Lower leg skin (tissue), 4 donors: ENCODE measurements at regions of chr9 and their contacts with region 1.

Region 1: GRCh38 chr9:9783711-9784110 is 829.1 kb downstream of the PTPRD start:
- DNase-seq: no peak
- H3K4me3 ChIP-seq: no peak overlapping the region
- CTCF ChIP-seq: no peak
- POLR2A ChIP-seq: no peak

Region 2: DNA sequence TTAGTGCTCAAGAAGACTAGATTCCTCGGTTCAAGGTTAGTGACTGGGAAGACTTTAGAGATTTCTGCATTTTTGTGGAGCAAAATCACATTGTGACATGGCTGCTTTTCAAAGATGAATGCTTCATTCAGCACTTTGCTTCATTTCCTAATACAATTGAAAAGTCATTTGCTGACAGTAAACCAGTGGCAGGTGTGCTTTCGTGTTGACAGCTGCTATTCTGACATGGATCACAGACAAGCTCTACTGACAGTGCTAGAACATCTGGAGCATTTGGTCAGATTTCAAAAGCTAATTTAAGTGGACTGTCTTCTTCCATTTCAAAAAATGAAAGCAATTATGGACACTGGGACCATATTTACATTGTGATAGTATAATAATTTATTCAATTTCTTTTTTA is 231.0 kb before region 1 on chr9:
- intact Hi-C with region 1: no loop called
- DNase-seq: no peak
- H3K4me3 ChIP-seq: no peak overlapping the region
- CTCF ChIP-seq: no peak
- POLR2A ChIP-seq: no peak

Region 3: GRCh38 chr9:9718656-9719055 is 65.1 kb before region 1 on chr9:
- intact Hi-C with region 1: loop called (anchors 2 kb)
- DNase-seq: no peak
- H3K4me3 ChIP-seq: no peak overlapping the region
- CTCF ChIP-seq: no peak
- POLR2A ChIP-seq: no peak

Region 4: GRCh38 chr9:11045589-11045988 is 1261.9 kb after region 1 on chr9:
- intact Hi-C with region 1: no loop called
- DNase-seq: no peak
- H3K4me3 ChIP-seq: no peak overlapping the region
- CTCF ChIP-seq: no peak
- POLR2A ChIP-seq: no peak